HCT116 (cell line): ENCODE measurements at regions of chrX and their contacts with region 1.

Region 1: GRCh38 chrX:101803451-101803850 is 128.4 kb downstream of the ZMAT1 start:
- DNase-seq: no peak
- ATAC-seq: peak; percentile 35; the same call in 1 of the 2 replicates
- H3K4me3 ChIP-seq: no peak overlapping the region
- H3K27ac ChIP-seq: no peak overlapping the region
- H3K4me1 ChIP-seq: no peaks in the 10 kb centered on the region
- H3K27me3 ChIP-seq: 0 out of 2 replicates have a peak, but pooled peaks cover 13% of the 10 kb centered on the region
- CTCF ChIP-seq: peak; percentile 36 to 59 (median 54); a peak in 5 of 6 replicates
- POLR2A ChIP-seq: no peak
- RAD21 ChIP-seq: peak; percentile 61

Region 2: GRCh38 chrX:101415180-101416145 is 388.0 kb before region 1 on chrX:
- CTCF ChIA-PET with region 1: no interaction called
- POLR2A ChIA-PET with region 1: no interaction called
- RAD21 ChIA-PET with region 1: no interaction called
- intact Hi-C with region 1: loop called (anchors 1 kb)
- DNase-seq: no peak
- ATAC-seq: peak; percentile 63
- H3K4me3 ChIP-seq: no peak overlapping the region
- H3K27ac ChIP-seq: peak overlapping the region; percentile 40; the same call in 1 of the 2 replicates
- H3K4me1 ChIP-seq: no peaks in the 10 kb centered on the region
- H3K27me3 ChIP-seq: no peaks in the 10 kb centered on the region
- CTCF ChIP-seq: peak; percentile 39 to 72 (median 51); a peak in 5 of 6 replicates
- POLR2A ChIP-seq: no peak
- RAD21 ChIP-seq: peak; percentile 60

Region 3: GRCh38 chrX:101462892-101463291 is 340.6 kb before region 1 on chrX:
- CTCF ChIA-PET with region 1: no interaction called
- POLR2A ChIA-PET with region 1: no interaction called
- RAD21 ChIA-PET with region 1: no interaction called
- intact Hi-C with region 1: loop called (anchors 5 kb)
- DNase-seq: peak; percentile 15
- ATAC-seq: peak; percentile 86
- H3K4me3 ChIP-seq: no peak overlapping the region
- H3K27ac ChIP-seq: no peak overlapping the region
- H3K4me1 ChIP-seq: no peaks in the 10 kb centered on the region
- H3K27me3 ChIP-seq: no peaks in the 10 kb centered on the region
- CTCF ChIP-seq: peak; percentile 14 to 33 (median 23); a peak in 4 of 6 replicates
- POLR2A ChIP-seq: no peak
- RAD21 ChIP-seq: peak; percentile 44

Region 4: GRCh38 chrX:101564651-101565165 is 238.7 kb before region 1 on chrX:
- CTCF ChIA-PET with region 1: no interaction called
- POLR2A ChIA-PET with region 1: no interaction called
- RAD21 ChIA-PET with region 1: no interaction called
- intact Hi-C with region 1: no loop called
- DNase-seq: no peak
- ATAC-seq: no peak
- H3K4me3 ChIP-seq: no peak overlapping the region
- H3K27ac ChIP-seq: no peak overlapping the region
- H3K4me1 ChIP-seq: no peaks in the 10 kb centered on the region
- H3K27me3 ChIP-seq: no peaks in the 10 kb centered on the region
- CTCF ChIP-seq: no peak
- POLR2A ChIP-seq: no peak
- RAD21 ChIP-seq: no peak

Region 5: GRCh38 chrX:101993335-101993734 is 189.9 kb after region 1 on chrX:
- CTCF ChIA-PET with region 1: no interaction called
- POLR2A ChIA-PET with region 1: no interaction called
- RAD21 ChIA-PET with region 1: no interaction called
- intact Hi-C with region 1: no loop called
- DNase-seq: no peak
- ATAC-seq: no peak
- H3K4me3 ChIP-seq: no peak overlapping the region
- H3K27ac ChIP-seq: no peak overlapping the region
- H3K4me1 ChIP-seq: no peaks in the 10 kb centered on the region
- H3K27me3 ChIP-seq: no peaks in the 10 kb centered on the region
- CTCF ChIP-seq: no peak
- POLR2A ChIP-seq: no peak
- RAD21 ChIP-seq: no peak